ENCODE measurements at regions of chrX and their contacts with region 1.

Region 1: GRCh38 chrX:106802387-106803275 is at the start of gene TBC1D8B:
- DNase-seq: peak; percentile 27
- ATAC-seq: peak; percentile 93
- H3K4me3 Mint-ChIP-seq: peak within 1 kb of the TSS; percentile 82
- H3K27ac Mint-ChIP-seq: peak within 1 kb of the TSS; percentile 78
- H3K4me1 Mint-ChIP-seq: peaks cover 7% of the 10 kb centered on the region
- H3K27me3 Mint-ChIP-seq: peaks cover 37% of the 10 kb centered on the region
- total RNA-seq, gene TBC1D8B: 0.82 to 0.88 TPM

Region 2: GRCh38 chrX:106450405-106450804 is 352.2 kb before region 1 on chrX:
- CTCF ChIA-PET with region 1: no interaction called
- POLR2A ChIA-PET with region 1: no interaction called
- intact Hi-C with region 1: no loop called
- DNase-seq: no peak
- ATAC-seq: no peak
- H3K4me3 Mint-ChIP-seq: no peak overlapping the region
- H3K27ac Mint-ChIP-seq: no peak overlapping the region
- H3K4me1 Mint-ChIP-seq: no peaks in the 10 kb centered on the region
- H3K27me3 Mint-ChIP-seq: peaks cover 2% of the 10 kb centered on the region

Region 3: DNA sequence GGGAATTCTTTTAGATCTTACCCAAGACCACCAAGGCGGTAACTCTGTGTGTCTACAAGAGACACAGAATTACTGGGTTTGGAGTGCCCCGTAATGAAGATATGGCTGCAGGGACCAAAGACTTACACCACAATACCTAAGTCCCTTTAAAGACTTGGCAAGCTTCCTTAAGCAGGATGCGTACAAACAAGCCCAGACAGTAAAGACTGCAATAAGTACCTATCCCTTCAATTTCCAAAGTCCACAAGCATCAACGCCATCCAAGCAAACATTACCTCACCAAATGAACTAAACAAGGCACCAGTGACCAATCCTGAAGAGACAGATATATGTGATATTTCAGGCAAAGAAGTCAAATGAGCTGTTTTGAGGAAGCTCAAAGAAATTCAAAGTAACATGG is 118.4 kb before region 1 on chrX:
- CTCF ChIA-PET with region 1: no interaction called
- POLR2A ChIA-PET with region 1: interaction called, 10 read pairs
- intact Hi-C with region 1: no loop called
- DNase-seq: no peak
- ATAC-seq: no peak
- H3K4me3 Mint-ChIP-seq: no peak overlapping the region
- H3K27ac Mint-ChIP-seq: no peak overlapping the region
- H3K4me1 Mint-ChIP-seq: no peaks in the 10 kb centered on the region
- H3K27me3 Mint-ChIP-seq: no peaks in the 10 kb centered on the region

Region 4: DNA sequence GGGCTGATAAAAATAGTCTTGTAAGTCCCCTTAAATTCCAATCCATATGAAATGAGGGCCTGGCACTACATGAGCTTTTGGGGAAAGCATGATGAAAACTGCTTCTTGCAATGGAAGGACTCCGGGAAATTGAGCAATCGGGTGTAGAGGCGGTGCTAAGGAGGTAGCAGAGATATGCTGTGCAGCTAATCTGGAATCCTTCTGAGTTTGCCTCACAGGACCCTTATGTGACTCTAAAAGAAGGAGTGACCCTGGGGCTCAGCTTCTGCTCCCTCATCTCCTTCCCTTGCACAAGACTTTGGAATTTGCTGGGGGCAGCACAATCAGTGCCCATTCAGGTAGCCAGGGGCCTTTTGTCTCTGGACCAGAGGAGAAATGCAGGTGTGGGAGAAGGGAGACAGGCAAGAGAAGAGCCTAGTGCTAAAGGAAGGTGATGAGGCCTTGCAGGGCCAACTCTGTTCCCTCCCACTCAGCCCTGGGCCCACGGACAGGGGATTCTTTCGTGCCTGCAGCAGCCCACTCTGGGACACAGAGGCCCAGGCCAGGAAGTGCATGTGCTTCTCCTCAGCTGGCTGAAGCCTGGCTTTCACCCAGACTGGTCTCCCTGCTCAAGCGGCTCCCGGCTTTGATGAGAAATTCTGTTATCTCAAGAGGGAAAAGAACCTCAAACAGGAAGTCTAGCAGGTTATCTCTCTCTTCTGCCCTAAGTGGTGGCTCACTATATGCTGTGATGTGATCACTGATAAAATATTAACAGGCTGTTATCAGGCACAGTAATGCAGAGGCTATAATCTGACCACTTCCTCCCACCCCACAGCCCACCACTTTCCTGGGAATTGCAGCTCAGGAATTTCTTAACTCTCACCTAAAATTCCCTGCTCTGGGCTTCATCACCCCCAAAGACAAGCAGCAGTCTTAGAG is 130.7 kb after region 1 on chrX:
- CTCF ChIA-PET with region 1: no interaction called
- POLR2A ChIA-PET with region 1: no interaction called
- intact Hi-C with region 1: no loop called
- DNase-seq: no peak
- ATAC-seq: no peak
- H3K4me3 Mint-ChIP-seq: no peak overlapping the region
- H3K27ac Mint-ChIP-seq: no peak overlapping the region
- H3K4me1 Mint-ChIP-seq: peaks cover 2% of the 10 kb centered on the region
- H3K27me3 Mint-ChIP-seq: no peaks in the 10 kb centered on the region

Measured in activated CD4-positive, alpha-beta T cell treated with anti-CD3 and anti-CD28 coated beads for 36 hours (primary cell).